A549 (cell line): ENCODE measurements at regions of chr2 and their contacts with region 1.

Region 1: DNA sequence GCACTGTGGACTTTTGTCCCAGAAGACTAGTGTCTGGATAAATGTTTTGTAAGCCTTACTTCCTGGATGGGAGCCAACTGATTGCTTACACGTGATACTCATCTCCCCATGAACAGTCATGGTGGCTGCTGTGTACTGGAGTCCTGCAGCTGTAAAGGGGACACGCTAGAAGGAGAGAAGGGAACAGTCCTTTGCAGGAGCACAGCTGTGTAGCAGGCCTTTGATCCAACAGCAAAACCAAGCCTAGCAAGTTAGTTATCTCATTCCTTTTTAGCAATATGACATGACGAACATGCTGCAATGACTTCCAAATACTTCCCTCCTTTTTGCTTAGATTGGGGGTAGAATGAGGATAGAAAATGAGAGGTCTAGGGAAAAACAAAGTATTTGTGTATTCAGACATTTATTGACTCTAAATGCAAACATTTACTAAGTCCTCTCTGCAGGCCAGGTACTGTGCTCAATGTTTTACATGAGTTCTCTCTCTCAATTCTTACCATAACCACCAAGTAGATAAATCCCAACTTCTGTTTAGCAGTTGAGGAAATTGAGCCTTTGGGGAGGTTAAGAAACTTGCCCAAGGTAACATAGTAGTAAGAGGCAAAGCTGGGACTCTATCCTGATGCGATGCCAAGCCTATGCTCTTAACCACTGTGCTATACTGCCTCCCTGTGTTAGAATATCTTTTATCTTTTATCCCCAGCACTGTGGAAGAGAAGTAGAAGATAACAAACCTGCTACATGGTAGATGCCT is 55.4 kb upstream of the CD28 start:
- DNase-seq: peak; percentile 31 to 71
- ATAC-seq: peak; percentile 86 to 92
- H3K4me3 ChIP-seq: no peak overlapping the region
- H3K27ac ChIP-seq: peak overlapping the region; percentile 68 to 78
- H3K4me1 ChIP-seq: peaks cover 53% of the 10 kb centered on the region
- CTCF ChIP-seq: peak; percentile 76
- EP300 ChIP-seq: no peak
- POLR2A ChIP-seq: no peak
- RAD21 ChIP-seq: peak; percentile 85 to 90

Region 2: GRCh38 chr2:203484266-203485112 is 166.5 kb before region 1 on chr2:
- CTCF ChIA-PET with region 1: interaction called, 13 read pairs
- POLR2A ChIA-PET with region 1: no interaction called
- DNase-seq: peak in 1 of 2 experiments; percentile 61
- ATAC-seq: peak; percentile 90 to 96; a peak in 5 of 6 replicates
- H3K4me3 ChIP-seq: no peak overlapping the region
- H3K27ac ChIP-seq: no peak overlapping the region
- H3K4me1 ChIP-seq: no peaks in the 10 kb centered on the region
- CTCF ChIP-seq: peak; percentile 68
- EP300 ChIP-seq: no peak
- POLR2A ChIP-seq: no peak
- RAD21 ChIP-seq: peak; percentile 85 to 89

Region 3: DNA sequence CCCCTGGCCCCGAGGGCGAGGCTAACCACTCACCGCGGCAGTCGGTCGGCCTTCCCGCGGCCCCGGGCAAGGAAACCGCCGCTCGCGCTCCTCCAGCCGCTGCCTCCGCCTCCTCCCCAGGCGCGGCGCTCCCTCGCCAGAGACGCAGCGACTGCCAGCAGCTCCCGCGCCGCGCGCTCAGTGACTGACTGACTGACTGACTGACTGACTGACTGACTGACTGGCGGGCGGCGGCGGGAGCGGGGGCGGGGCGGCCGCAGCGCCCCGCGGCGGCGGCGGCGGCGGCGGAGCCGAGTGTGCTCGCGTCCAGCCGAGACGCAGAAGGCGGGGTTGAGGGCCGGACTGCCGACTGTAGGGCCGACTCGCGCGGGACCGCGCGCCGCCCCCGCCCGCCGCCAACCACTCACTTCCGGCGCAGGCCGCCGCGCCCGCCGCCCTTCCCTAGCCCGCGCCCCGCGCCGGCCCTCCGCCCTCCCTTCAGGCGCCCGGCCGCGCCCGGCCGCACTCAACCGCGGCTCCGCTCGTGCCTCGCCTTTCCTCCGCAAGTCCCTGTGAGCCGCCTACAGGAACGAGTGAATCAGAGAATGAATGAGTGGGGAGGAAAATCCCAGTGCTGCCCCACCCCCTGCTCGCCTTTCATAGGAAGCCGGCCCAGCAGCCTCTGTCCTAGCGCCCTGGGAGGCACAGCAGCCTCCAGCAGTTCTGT is 115.8 kb before region 1 on chr2 and contains the start of gene RAPH1:
- CTCF ChIA-PET with region 1: no interaction called
- POLR2A ChIA-PET with region 1: interaction called, 12 read pairs
- DNase-seq: peak; percentile 77 to 88
- ATAC-seq: peak; percentile 91 to 93
- H3K4me3 ChIP-seq: peak within 1 kb of the TSS; percentile 72
- H3K27ac ChIP-seq: peak within 1 kb of the TSS; percentile 86 to 93
- H3K4me1 ChIP-seq: peaks cover 17% of the 10 kb centered on the region
- CTCF ChIP-seq: peak; percentile 27; the same call in 2 of the 3 replicates
- EP300 ChIP-seq: no peak
- POLR2A ChIP-seq: peak; percentile 59
- RAD21 ChIP-seq: peak in 1 of 2 experiments; percentile 13; a peak in 1 of 5 replicates
- polyA plus RNA-seq, gene RAPH1: 7.3 and 11.6 TPM in 2 replicates

Region 4: GRCh38 chr2:203562268-203562667 is 88.8 kb before region 1 on chr2:
- CTCF ChIA-PET with region 1: no interaction called
- POLR2A ChIA-PET with region 1: no interaction called
- DNase-seq: no peak
- ATAC-seq: no peak
- H3K4me3 ChIP-seq: no peak overlapping the region
- H3K27ac ChIP-seq: no peak overlapping the region
- H3K4me1 ChIP-seq: no peaks in the 10 kb centered on the region
- CTCF ChIP-seq: no peak
- EP300 ChIP-seq: no peak
- POLR2A ChIP-seq: no peak
- RAD21 ChIP-seq: no peak